ENCODE measurements at regions of chr19 and their contacts with region 1.

Region 1: DNA sequence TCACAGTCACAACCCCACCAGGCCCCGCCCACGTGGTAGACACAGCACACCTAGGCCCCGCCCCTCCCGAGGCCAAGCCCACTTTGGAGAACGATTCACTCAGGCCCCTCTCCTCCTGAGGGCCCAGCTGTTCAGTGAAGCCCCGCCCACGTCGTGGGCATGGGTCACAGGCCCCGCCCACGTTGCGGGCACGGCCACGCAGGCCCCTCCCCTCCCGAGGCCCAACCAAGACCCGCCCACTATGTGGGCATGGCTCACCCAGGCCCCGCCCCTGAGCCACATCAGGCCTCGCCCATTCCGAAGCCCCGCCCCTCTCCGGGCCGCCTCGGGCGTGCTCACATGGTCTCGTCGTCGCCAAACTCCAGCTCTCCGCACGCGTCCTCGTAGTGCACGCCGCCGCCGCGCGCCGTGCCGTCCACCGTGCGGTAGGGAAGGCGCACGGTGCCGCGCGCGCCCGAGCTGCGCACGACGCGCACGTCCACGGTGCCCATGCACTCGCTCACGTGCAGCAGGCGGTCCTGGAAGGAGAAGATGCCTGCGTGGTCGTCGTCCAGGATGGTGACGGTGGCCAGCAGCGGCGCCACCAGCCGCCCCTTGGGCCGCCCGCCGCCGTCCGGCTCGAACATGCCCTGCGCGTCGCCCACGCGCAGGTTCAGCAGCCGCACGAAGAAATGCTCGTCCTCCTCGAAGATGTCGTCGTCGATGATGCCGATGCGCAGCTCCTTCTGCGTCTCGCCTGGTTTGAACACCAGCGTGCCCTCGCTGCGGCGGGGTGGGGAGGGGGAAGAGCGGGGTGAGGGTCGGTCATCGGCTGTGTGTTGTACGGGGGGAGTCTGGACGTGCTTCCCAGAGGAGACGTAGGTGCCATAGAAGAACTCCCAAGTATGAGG is 24.0 kb downstream of the SLC8A2 start:
- DNase-seq: peak; percentile 85
- ATAC-seq: peak; percentile 88
- H3K4me3 ChIP-seq: peak overlapping the region; percentile 36 to 55
- H3K27ac ChIP-seq: peak overlapping the region; percentile 56; the same call in 1 of the 2 replicates
- H3K4me1 ChIP-seq: peaks cover 17 to 23% of the 10 kb centered on the region in 2 experiments
- H3K27me3 ChIP-seq: peaks cover 19% of the 10 kb centered on the region
- CTCF ChIP-seq: no peak
- POLR2A ChIP-seq: no peak
- RAD21 ChIP-seq: no peak

Region 2: GRCh38 chr19:47414469-47414868 is 33.2 kb before region 1 on chr19:
- CTCF ChIA-PET with region 1: no interaction called
- POLR2A ChIA-PET with region 1: no interaction called
- RAD21 ChIA-PET with region 1: no interaction called
- intact Hi-C with region 1: no loop called
- DNase-seq: no peak
- ATAC-seq: no peak
- H3K4me3 ChIP-seq: no peak overlapping the region
- H3K27ac ChIP-seq: no peak overlapping the region
- H3K4me1 ChIP-seq: peaks cover 9% of the 10 kb centered on the region in 2 experiments; a peak in 3 of 4 replicates
- H3K27me3 ChIP-seq: peaks cover under 1% of the 10 kb centered on the region; the same call in 1 of the 2 replicates
- CTCF ChIP-seq: no peak
- POLR2A ChIP-seq: no peak
- RAD21 ChIP-seq: no peak

Region 3: DNA sequence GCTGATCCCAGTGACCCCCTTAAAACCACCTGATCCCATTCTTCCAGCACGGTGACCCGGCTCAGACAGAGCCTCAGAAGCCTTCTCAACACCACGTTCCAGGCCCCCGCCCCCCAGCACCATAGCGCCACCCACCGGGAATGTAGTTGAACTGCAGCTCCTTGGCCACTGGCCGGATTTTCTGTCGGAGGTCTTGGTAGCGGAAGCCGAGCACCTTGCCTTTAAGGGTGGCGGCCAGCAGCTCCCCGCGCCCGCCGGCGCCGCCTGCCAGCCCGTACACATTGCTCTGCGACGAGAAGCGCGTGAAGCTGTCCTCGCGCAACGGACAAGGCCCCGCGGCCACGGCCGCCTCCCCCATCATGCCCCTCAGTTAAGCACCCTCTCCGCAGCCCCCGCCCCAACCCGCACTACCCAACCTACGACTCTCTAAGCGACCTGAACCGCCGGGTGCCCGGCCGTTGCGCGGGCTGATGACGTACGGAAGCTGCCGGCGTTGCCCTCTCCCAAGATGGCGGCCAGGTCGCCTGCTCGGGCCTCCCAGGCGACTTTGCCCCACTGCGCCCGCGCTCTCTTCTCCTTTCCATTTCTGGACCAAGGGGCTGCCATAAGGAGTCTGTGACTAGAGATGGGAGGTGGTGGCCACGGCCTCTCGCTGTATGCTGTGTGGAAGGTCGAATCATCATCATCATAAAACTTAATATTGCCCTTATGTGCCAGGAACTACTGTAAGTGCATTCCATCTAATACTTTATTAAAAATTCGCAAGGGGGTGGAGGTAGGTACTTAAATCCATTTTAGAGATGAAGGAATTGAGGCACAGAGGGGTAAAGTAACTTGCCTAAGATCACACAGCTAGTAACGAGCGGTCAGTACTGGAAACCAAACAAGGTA is 36.3 kb after region 1 on chr19 and contains the start of gene KPTN:
- CTCF ChIA-PET with region 1: interaction called, 5 read pairs
- POLR2A ChIA-PET with region 1: interaction called, 3 read pairs
- RAD21 ChIA-PET with region 1: interaction called in 1 of 2 experiments, 4 read pairs
- intact Hi-C with region 1: loop called (anchors 5 kb)
- DNase-seq: peak; percentile 86
- ATAC-seq: peak; percentile 83
- H3K4me3 ChIP-seq: peak within 1 kb of the TSS; percentile 71 to 92
- H3K27ac ChIP-seq: peak within 1 kb of the TSS; percentile 78
- H3K4me1 ChIP-seq: peaks cover 6 to 18% of the 10 kb centered on the region in 2 experiments; a peak in 2 of 4 replicates
- H3K27me3 ChIP-seq: no peaks in the 10 kb centered on the region
- CTCF ChIP-seq: peak; percentile 68 to 96 (median 92); a peak in 5 of 6 replicates
- POLR2A ChIP-seq: no peak
- RAD21 ChIP-seq: peak; percentile 70
- total RNA-seq, gene KPTN: 23.8 TPM

Region 4: GRCh38 chr19:47514869-47515588 is 67.3 kb after region 1 on chr19 and contains the start of gene NAPA:
- CTCF ChIA-PET with region 1: interaction called, 8 read pairs
- POLR2A ChIA-PET with region 1: no interaction called
- RAD21 ChIA-PET with region 1: no interaction called
- intact Hi-C with region 1: loop called (anchors 2 kb)
- DNase-seq: peak; percentile 99
- ATAC-seq: peak; percentile 95
- H3K4me3 ChIP-seq: peak within 1 kb of the TSS; percentile 88 to 100
- H3K27ac ChIP-seq: peak within 1 kb of the TSS; percentile 64
- H3K4me1 ChIP-seq: peaks cover 8 to 26% of the 10 kb centered on the region in 2 experiments; a peak in 3 of 4 replicates
- H3K27me3 ChIP-seq: no peaks in the 10 kb centered on the region
- CTCF ChIP-seq: no peak
- POLR2A ChIP-seq: no peak
- RAD21 ChIP-seq: no peak; the same call in 1 of the 2 replicates
- total RNA-seq, gene NAPA: 58.8 TPM

Region 5: DNA sequence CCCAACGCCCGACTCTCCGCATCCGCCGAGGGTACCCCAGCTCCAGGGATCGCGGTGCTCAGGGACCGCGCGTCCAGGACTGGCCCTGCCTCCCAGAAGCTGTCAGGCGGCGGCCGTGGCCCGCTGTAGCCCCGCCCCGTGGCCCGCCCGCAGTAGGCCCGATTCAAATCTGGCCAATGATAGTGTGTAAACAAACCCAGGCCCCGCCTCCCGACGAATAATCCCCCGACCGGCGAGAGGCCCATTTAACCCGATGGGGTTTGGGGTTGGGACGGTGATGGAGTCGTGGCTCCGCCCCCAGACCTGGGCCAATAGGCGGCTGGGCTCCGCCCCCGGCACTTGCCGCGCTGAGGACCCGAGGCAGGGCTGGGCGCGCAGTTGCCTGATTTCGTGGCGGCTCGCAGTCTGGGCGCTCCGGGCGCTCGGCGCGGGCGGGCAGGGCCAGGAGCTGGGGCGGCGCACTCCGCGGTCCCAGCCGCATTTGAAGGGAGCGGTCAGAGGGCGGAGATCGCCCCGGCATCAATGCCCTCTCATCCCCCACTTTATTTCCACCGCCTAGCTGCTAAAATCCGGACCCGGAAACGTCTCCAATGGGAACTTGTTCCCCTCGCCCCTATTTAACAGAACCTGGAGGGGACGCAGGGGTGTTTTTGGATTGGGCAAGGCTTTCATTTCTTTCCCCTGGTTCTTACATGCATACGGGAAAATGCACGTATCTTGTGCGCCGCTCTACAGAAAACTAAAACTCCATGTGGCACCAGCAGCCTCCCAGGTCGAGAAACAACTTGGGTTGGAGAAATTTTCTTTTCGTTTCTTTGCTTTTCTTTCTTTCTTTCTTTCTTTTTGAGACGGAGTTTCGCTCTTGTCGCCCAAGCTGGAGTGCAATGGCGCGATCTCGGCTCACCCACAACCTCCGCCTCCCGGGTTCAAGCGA is 152.8 kb after region 1 on chr19:
- CTCF ChIA-PET with region 1: no interaction called
- POLR2A ChIA-PET with region 1: no interaction called
- RAD21 ChIA-PET with region 1: no interaction called
- intact Hi-C with region 1: loop called (anchors 10 kb)
- DNase-seq: peak; percentile 96
- ATAC-seq: peak; percentile 92
- H3K4me3 ChIP-seq: peak overlapping the region; percentile 74 to 86
- H3K27ac ChIP-seq: peak overlapping the region; percentile 75
- H3K4me1 ChIP-seq: peaks cover 22 to 35% of the 10 kb centered on the region in 2 experiments
- H3K27me3 ChIP-seq: no peaks in the 10 kb centered on the region
- CTCF ChIP-seq: no peak
- POLR2A ChIP-seq: peak; percentile 69
- RAD21 ChIP-seq: no peak

Region 6: DNA sequence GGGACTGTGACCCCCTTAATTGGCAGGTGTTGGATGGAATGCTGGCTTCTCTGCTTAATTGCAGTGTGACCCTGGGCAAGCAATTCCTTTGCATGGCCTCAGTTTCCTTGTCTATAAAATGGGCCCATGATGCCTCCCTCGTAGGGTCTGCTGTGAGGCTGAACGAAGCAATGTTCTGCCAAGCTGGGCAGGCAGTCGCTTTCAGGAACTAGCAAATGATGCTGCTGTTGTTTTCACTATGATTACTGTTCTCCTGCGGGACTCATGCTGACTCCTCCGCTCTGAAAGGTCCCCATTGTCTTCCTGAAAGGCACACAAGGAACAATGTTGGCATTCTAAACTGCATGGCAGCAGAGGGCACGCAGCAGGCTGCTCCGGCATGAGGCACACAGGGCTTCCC is 168.0 kb after region 1 on chr19:
- CTCF ChIA-PET with region 1: no interaction called
- POLR2A ChIA-PET with region 1: no interaction called
- RAD21 ChIA-PET with region 1: no interaction called
- intact Hi-C with region 1: no loop called
- DNase-seq: no peak
- ATAC-seq: no peak
- H3K4me3 ChIP-seq: no peak overlapping the region
- H3K27ac ChIP-seq: no peak overlapping the region
- H3K4me1 ChIP-seq: peaks cover 6 to 8% of the 10 kb centered on the region in 2 experiments; a peak in 3 of 4 replicates
- H3K27me3 ChIP-seq: no peaks in the 10 kb centered on the region
- CTCF ChIP-seq: no peak
- POLR2A ChIP-seq: no peak
- RAD21 ChIP-seq: no peak